ENCODE measurements at regions of chr2 and their contacts with region 1.

Region 1: GRCh38 chr2:183248866-183249567 is 124.8 kb downstream of the NUP35 start:
- DNase-seq: no peak
- H3K4me3 ChIP-seq: no peak overlapping the region
- H3K27ac ChIP-seq: no peak overlapping the region
- H3K4me1 ChIP-seq: no peaks in the 10 kb centered on the region
- H3K27me3 ChIP-seq: no peaks in the 10 kb centered on the region
- CTCF ChIP-seq: peak; percentile 92

Region 2: DNA sequence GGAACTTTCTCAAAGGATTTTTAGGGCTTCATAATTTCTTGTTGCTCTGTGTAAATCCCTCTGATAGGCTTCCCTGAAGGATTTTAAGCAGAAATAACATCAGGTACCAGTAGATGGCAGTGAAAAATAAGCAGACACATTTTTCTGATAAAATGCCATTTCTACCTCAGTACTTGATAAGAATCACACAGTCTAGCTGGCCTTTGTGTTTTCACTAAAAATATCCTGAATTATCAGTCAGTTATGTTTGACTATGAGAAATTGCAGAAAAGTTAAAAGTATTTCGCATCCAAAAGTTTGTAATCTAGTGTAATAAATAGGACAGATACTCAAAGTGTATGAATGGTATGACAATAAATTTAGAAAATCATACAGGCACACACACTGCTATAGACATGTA is 464.2 kb before region 1 on chr2:
- CTCF ChIA-PET with region 1: no interaction called
- POLR2A ChIA-PET with region 1: no interaction called
- intact Hi-C with region 1: loop called (anchors 10 kb)
- DNase-seq: peak in 1 of 2 experiments; percentile 46
- H3K4me3 ChIP-seq: no peak overlapping the region
- H3K27ac ChIP-seq: no peak overlapping the region
- H3K4me1 ChIP-seq: no peaks in the 10 kb centered on the region
- H3K27me3 ChIP-seq: no peaks in the 10 kb centered on the region
- CTCF ChIP-seq: peak; percentile 81

Region 3: GRCh38 chr2:183359867-183360266 is 110.8 kb after region 1 on chr2:
- CTCF ChIA-PET with region 1: no interaction called
- POLR2A ChIA-PET with region 1: no interaction called
- intact Hi-C with region 1: loop called (anchors 2 kb)
- DNase-seq: no peak
- H3K4me3 ChIP-seq: no peak overlapping the region
- H3K27ac ChIP-seq: no peak overlapping the region
- H3K4me1 ChIP-seq: no peaks in the 10 kb centered on the region
- H3K27me3 ChIP-seq: no peaks in the 10 kb centered on the region
- CTCF ChIP-seq: peak; percentile 39

Region 4: GRCh38 chr2:183696028-183696427 is 447.0 kb after region 1 on chr2:
- CTCF ChIA-PET with region 1: no interaction called
- POLR2A ChIA-PET with region 1: no interaction called
- intact Hi-C with region 1: loop called (anchors 10 kb)
- DNase-seq: no peak
- H3K4me3 ChIP-seq: no peak overlapping the region
- H3K27ac ChIP-seq: no peak overlapping the region
- H3K4me1 ChIP-seq: no peaks in the 10 kb centered on the region
- H3K27me3 ChIP-seq: no peaks in the 10 kb centered on the region
- CTCF ChIP-seq: no peak

Measured in PC-9 (cell line).